ENCODE measurements at regions of chr13 and their contacts with region 1.

Region 1: GRCh38 chr13:50664951-50665350 is 178.5 kb downstream of the DLEU7 start:
- DNase-seq: no peak
- H3K4me3 ChIP-seq: no peak overlapping the region
- H3K27ac ChIP-seq: no peak overlapping the region
- H3K4me1 ChIP-seq: no peaks in the 10 kb centered on the region
- H3K27me3 ChIP-seq: no peaks in the 10 kb centered on the region
- CTCF ChIP-seq: no peak

Region 2: DNA sequence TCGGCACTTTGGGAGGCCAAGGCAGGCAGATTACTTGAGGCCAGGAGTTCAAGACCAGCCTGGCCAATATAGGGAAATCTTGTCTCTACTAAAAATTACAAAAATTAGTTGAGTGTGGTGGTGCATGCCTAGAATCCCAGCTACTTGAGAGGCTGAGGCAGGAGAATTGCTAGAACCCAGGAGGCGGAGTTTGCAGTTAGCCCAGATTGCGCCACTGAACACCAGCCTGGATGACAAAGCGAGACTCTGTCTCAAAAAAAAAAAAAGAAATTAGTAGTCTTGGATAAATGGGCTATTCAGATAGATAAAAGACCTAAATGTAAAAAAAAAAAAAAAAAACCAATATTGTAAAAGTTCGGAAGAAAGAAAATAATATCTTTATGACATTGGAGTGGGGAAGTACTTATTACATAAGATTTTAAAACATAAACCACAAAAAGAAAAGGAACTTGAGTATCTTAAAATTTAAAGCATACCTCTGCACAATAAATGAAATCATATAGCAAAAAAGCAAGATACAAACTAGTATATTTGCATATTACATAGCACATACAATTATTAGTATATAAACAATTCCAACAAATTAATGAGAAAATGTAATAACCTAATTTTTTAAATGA is 218.0 kb after region 1 on chr13:
- intact Hi-C with region 1: loop called (anchors 5 kb)
- DNase-seq: no peak
- H3K4me3 ChIP-seq: no peak overlapping the region
- H3K27ac ChIP-seq: no peak overlapping the region
- H3K4me1 ChIP-seq: no peaks in the 10 kb centered on the region
- H3K27me3 ChIP-seq: no peaks in the 10 kb centered on the region
- CTCF ChIP-seq: no peak

Region 3: GRCh38 chr13:51479199-51479523 is 814.2 kb after region 1 on chr13:
- intact Hi-C with region 1: no loop called
- DNase-seq: no peak
- H3K4me3 ChIP-seq: no peak overlapping the region
- H3K27ac ChIP-seq: no peak overlapping the region
- H3K4me1 ChIP-seq: no peaks in the 10 kb centered on the region
- H3K27me3 ChIP-seq: no peaks in the 10 kb centered on the region
- CTCF ChIP-seq: no peak